ENCODE measurements at regions of chr3 and their contacts with region 1.

Region 1: DNA sequence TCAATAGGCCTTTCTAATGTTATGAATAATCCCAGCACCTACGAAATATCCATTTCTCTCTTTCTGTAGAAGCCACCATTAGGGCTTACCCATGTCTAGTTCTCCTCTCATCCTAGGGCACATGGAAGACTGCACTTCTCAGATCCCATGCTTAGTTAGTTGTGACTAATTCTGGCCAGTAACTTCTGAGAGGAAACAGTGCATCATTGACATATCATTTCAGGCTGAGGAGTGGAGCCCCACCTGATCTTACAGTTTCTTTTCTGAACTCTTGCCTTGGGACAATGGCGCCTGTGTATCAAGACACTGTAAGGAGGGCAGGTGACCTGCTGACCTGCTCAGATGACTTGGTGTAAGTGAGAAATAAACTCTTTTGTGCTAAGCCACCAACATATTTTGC is 39.4 kb upstream of the TBL1XR1 start:
- DNase-seq: no peak
- ATAC-seq: no peak
- H3K4me3 Mint-ChIP-seq: no peak overlapping the region
- H3K27ac Mint-ChIP-seq: no peak overlapping the region
- H3K4me1 Mint-ChIP-seq: peaks cover 4% of the 10 kb centered on the region
- H3K27me3 Mint-ChIP-seq: no peaks in the 10 kb centered on the region
- CTCF ChIP-seq: no peak

Region 2: GRCh38 chr3:177220136-177220974 is 16.3 kb before region 1 on chr3:
- CTCF ChIA-PET with region 1: no interaction called
- POLR2A ChIA-PET with region 1: interaction called, 4 read pairs
- intact Hi-C with region 1: loop called (anchors 1 kb)
- DNase-seq: no peak
- ATAC-seq: no peak
- H3K4me3 Mint-ChIP-seq: no peak overlapping the region
- H3K27ac Mint-ChIP-seq: peak overlapping the region; percentile 38
- H3K4me1 Mint-ChIP-seq: peaks cover 30% of the 10 kb centered on the region
- H3K27me3 Mint-ChIP-seq: no peaks in the 10 kb centered on the region
- CTCF ChIP-seq: no peak

Region 3: GRCh38 chr3:177917234-177917861 is 680.6 kb after region 1 on chr3:
- CTCF ChIA-PET with region 1: no interaction called
- POLR2A ChIA-PET with region 1: no interaction called
- intact Hi-C with region 1: no loop called
- DNase-seq: no peak
- ATAC-seq: no peak
- H3K4me3 Mint-ChIP-seq: no peak overlapping the region
- H3K27ac Mint-ChIP-seq: no peak overlapping the region
- H3K4me1 Mint-ChIP-seq: no peaks in the 10 kb centered on the region
- H3K27me3 Mint-ChIP-seq: no peaks in the 10 kb centered on the region
- CTCF ChIP-seq: no peak